ENCODE measurements at regions of chr12 and their contacts with region 1.

Region 1: GRCh38 chr12:131830335-131830913 is 2.2 kb downstream of the MMP17 start:
- DNase-seq: peak in 1 of 2 donors; percentile 51
- ATAC-seq: peak; percentile 49 to 65 (median 65)
- H3K4me3 ChIP-seq: peak overlapping the region; percentile 16
- H3K4me3 Mint-ChIP-seq: peak overlapping the region; percentile 40
- H3K27ac ChIP-seq: no peak overlapping the region
- H3K27ac Mint-ChIP-seq: no peak overlapping the region
- H3K4me1 ChIP-seq: peaks cover 29% of the 10 kb centered on the region
- H3K4me1 Mint-ChIP-seq: peaks cover 4 to 11% of the 10 kb centered on the region in 2 donors
- H3K27me3 ChIP-seq: peaks cover 16% of the 10 kb centered on the region
- H3K27me3 Mint-ChIP-seq: peaks cover 26 to 35% of the 10 kb centered on the region in 2 donors
- CTCF ChIP-seq: peak; percentile 40

Region 2: DNA sequence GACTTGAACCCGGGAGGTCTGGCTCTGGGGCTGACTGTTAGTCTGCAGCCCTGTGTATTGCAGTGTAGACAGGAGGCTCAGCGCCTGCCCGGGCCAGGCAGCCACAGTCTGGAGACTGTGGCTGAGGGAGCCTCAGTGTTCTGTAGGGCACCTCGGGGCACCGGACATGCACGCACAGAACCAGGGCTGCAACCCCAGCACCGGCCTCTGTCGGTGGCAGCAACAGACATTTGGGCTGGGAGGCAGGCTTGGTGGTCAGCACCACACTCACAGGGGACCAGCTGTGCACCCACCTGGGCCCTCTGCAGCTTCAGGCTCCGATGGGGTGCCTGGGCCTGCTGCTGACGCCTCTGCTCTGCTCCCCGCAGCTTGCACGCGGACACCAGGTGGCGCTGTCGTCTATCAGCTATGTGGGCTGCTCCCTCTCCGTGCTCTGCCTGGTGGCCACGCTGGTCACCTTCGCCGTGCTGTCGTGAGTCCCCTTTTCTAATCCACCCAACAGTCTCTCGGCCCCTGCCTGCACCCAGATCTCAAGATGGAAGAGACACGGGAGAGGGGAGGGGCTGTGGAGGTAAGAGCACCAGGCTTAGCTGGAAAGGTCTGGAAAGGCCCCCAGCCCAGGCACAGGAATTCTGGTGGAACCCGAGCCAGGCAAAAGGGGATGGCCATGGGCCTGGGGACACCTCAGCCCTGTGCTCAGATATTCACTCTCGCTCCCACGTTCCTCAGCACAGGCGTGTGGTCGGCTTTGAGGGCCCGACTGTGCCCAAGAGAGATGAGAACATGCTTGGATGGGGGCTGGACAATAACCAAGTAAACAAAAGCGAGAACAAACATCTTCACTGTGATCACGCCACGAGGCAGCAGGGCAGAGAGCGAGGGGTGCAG is 725.7 kb before region 1 on chr12:
- intact Hi-C with region 1: loop called (anchors 5 kb)
- DNase-seq: peak; percentile 69 to 86
- ATAC-seq: peak; percentile 65 to 86 (median 68)
- H3K4me3 ChIP-seq: no peak overlapping the region
- H3K4me3 Mint-ChIP-seq: no peak overlapping the region
- H3K27ac ChIP-seq: no peak overlapping the region
- H3K27ac Mint-ChIP-seq: no peak overlapping the region
- H3K4me1 ChIP-seq: peaks cover 37% of the 10 kb centered on the region
- H3K4me1 Mint-ChIP-seq: peaks cover 4 to 16% of the 10 kb centered on the region in 2 donors
- H3K27me3 ChIP-seq: no peaks in the 10 kb centered on the region
- H3K27me3 Mint-ChIP-seq: peaks cover 0 to 6% of the 10 kb centered on the region in 2 donors
- CTCF ChIP-seq: peak; percentile 89

Region 3: DNA sequence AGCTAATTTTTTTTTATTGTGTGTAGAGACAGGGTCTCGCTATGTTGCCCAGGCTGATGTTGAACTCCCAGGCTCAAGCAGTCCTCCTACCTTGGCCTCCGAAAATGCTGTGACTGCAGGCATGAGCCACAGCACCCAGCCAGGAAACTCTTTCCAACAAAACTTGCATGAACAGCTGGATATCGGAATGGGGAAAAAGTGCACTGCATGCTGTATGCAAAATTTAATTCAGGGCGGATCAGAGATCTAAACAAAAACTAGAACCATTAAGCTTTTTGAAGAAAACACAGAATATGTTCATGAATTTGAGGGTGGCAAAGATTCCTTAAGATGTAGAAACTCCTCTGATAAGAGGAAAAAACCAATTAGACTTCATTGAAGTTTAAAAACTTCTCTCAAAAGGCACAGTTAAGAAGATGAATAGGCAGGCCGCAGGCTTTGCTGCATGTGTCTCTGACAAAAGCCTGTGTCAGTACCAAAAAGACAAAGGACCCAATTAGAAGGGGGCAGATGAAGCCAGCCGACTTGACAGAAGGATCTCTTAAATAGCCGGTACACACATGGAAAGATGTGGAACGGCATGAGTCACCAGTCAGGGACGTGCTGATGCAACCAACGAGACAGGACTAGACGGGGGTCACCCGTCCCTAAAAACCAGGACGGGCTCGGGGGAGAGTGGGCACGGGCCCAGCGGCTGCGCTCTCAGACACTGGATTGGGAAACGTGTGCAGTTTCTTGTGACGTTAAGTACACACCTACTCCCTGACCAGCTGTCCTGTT is 37.0 kb before region 1 on chr12:
- intact Hi-C with region 1: no loop called
- DNase-seq: no peak
- ATAC-seq: no peak
- H3K4me3 ChIP-seq: no peak overlapping the region
- H3K4me3 Mint-ChIP-seq: no peak overlapping the region
- H3K27ac ChIP-seq: no peak overlapping the region
- H3K27ac Mint-ChIP-seq: no peak overlapping the region
- H3K4me1 ChIP-seq: no peaks in the 10 kb centered on the region
- H3K4me1 Mint-ChIP-seq: peaks cover 0 to 4% of the 10 kb centered on the region in 2 donors
- H3K27me3 ChIP-seq: no peaks in the 10 kb centered on the region
- H3K27me3 Mint-ChIP-seq: no peaks in the 10 kb centered on the region
- CTCF ChIP-seq: no peak

Region 4: GRCh38 chr12:131850856-131851559 is 20.6 kb after region 1 on chr12:
- intact Hi-C with region 1: no loop called
- DNase-seq: peak in 1 of 2 donors; percentile 37
- ATAC-seq: peak in 2 of 3 donors; percentile 44 to 70
- H3K4me3 ChIP-seq: no peak overlapping the region
- H3K4me3 Mint-ChIP-seq: no peak overlapping the region
- H3K27ac ChIP-seq: no peak overlapping the region
- H3K27ac Mint-ChIP-seq: no peak overlapping the region
- H3K4me1 ChIP-seq: peaks cover 9% of the 10 kb centered on the region
- H3K4me1 Mint-ChIP-seq: no peaks in the 10 kb centered on the region
- H3K27me3 ChIP-seq: no peaks in the 10 kb centered on the region
- H3K27me3 Mint-ChIP-seq: no peaks in the 10 kb centered on the region
- CTCF ChIP-seq: no peak

Region 5: DNA sequence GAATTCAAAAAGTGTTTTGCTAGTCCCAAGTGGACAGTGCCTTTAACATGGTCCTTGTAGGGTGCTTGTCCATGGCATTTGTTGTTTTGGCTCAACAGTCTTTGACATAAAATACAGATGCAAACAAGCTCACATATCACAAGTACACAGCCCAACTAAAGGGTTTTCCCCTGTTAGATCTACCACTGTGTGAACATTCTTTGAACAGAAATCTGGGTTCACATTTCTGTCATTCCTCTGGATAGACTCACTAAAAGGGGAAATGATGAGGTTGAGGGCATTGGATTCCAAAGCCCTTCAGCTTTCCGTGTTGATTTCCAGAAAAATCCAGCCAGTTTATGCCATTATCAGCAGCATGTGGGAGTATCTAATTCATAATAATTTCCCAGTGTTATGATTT is 173.4 kb after region 1 on chr12:
- intact Hi-C with region 1: loop called (anchors 10 kb)
- DNase-seq: no peak
- ATAC-seq: no peak
- H3K4me3 ChIP-seq: no peak overlapping the region
- H3K4me3 Mint-ChIP-seq: no peak overlapping the region
- H3K27ac ChIP-seq: no peak overlapping the region
- H3K27ac Mint-ChIP-seq: no peak overlapping the region
- H3K4me1 ChIP-seq: no peaks in the 10 kb centered on the region
- H3K4me1 Mint-ChIP-seq: no peaks in the 10 kb centered on the region
- H3K27me3 ChIP-seq: no peaks in the 10 kb centered on the region
- H3K27me3 Mint-ChIP-seq: no peaks in the 10 kb centered on the region
- CTCF ChIP-seq: no peak

Measured in natural killer cell (primary cell).